Endothelial cell of umbilical vein (primary cell): ENCODE measurements at regions of chr13 and their contacts with region 1.

Region 1: GRCh38 chr13:80342471-80343380 is 1.8 kb upstream of the SPRY2 start:
- DNase-seq: peak; percentile 83
- H3K4me3 ChIP-seq: peak overlapping the region; percentile 30 to 77 (median 75)
- H3K27ac ChIP-seq: peak overlapping the region; percentile 82
- H3K4me1 ChIP-seq: peaks cover 17% of the 10 kb centered on the region
- H3K27me3 ChIP-seq: no peaks in the 10 kb centered on the region
- CTCF ChIP-seq: peak; percentile 97 to 98
- POLR2A ChIP-seq: no peak

Region 2: GRCh38 chr13:79767126-79767525 is 575.6 kb before region 1 on chr13:
- CTCF ChIA-PET with region 1: interaction called, 13 read pairs
- POLR2A ChIA-PET with region 1: interaction called, 7 read pairs
- dilution Hi-C with region 1: no loop called
- intact Hi-C with region 1: loop called (anchors 1 kb)
- DNase-seq: peak; percentile 73
- H3K4me3 ChIP-seq: no peak overlapping the region
- H3K27ac ChIP-seq: peak overlapping the region; percentile 76
- H3K4me1 ChIP-seq: peaks cover 14% of the 10 kb centered on the region
- H3K27me3 ChIP-seq: no peaks in the 10 kb centered on the region
- CTCF ChIP-seq: no peak
- POLR2A ChIP-seq: no peak

Region 3: DNA sequence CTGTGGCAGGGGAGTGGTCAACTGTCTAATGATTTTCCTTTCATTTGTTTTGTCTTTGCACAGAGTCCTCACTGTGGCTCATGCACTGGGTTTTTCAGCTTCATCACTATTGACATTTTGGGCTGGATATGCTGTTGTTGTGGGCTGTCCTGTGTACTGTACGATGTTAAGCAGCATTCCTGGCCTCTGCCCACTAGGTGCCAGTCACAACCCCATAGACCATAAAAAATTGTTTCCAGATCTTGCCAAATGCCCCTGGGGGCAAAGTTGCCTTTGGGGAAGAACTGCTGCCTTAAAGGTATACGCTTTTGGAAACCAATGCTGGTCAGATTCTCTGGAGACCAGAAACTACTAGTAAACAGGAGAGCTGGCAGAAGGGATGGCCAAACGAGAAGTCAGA is 312.2 kb before region 1 on chr13:
- CTCF ChIA-PET with region 1: interaction called, 3 read pairs
- POLR2A ChIA-PET with region 1: no interaction called
- dilution Hi-C with region 1: loop called (anchors 25 kb)
- intact Hi-C with region 1: loop called (anchors 1 kb)
- DNase-seq: peak; percentile 14
- H3K4me3 ChIP-seq: no peak overlapping the region
- H3K27ac ChIP-seq: no peak overlapping the region
- H3K4me1 ChIP-seq: no peaks in the 10 kb centered on the region
- H3K27me3 ChIP-seq: no peaks in the 10 kb centered on the region
- CTCF ChIP-seq: peak; percentile 38 to 40
- POLR2A ChIP-seq: no peak

Region 4: GRCh38 chr13:80217614-80218456 is 124.9 kb before region 1 on chr13:
- CTCF ChIA-PET with region 1: no interaction called
- POLR2A ChIA-PET with region 1: no interaction called
- dilution Hi-C with region 1: no loop called
- intact Hi-C with region 1: loop called (anchors 1 kb)
- DNase-seq: peak; percentile 82
- H3K4me3 ChIP-seq: no peak overlapping the region
- H3K27ac ChIP-seq: peak overlapping the region; percentile 85
- H3K4me1 ChIP-seq: peaks cover 15% of the 10 kb centered on the region
- H3K27me3 ChIP-seq: no peaks in the 10 kb centered on the region
- CTCF ChIP-seq: no peak
- POLR2A ChIP-seq: no peak

Region 5: GRCh38 chr13:80251403-80251802 is 91.3 kb before region 1 on chr13:
- CTCF ChIA-PET with region 1: no interaction called
- POLR2A ChIA-PET with region 1: no interaction called
- dilution Hi-C with region 1: no loop called
- intact Hi-C with region 1: no loop called
- DNase-seq: no peak
- H3K4me3 ChIP-seq: no peak overlapping the region
- H3K27ac ChIP-seq: no peak overlapping the region
- H3K4me1 ChIP-seq: no peaks in the 10 kb centered on the region
- H3K27me3 ChIP-seq: no peaks in the 10 kb centered on the region
- CTCF ChIP-seq: no peak
- POLR2A ChIP-seq: no peak

Region 6: GRCh38 chr13:80551650-80552497 is 209.1 kb after region 1 on chr13:
- CTCF ChIA-PET with region 1: no interaction called
- POLR2A ChIA-PET with region 1: no interaction called
- dilution Hi-C with region 1: no loop called
- intact Hi-C with region 1: loop called (anchors 2 kb)
- DNase-seq: peak; percentile 88
- H3K4me3 ChIP-seq: no peak overlapping the region
- H3K27ac ChIP-seq: no peak overlapping the region
- H3K4me1 ChIP-seq: peaks cover 46% of the 10 kb centered on the region
- H3K27me3 ChIP-seq: no peaks in the 10 kb centered on the region
- CTCF ChIP-seq: no peak
- POLR2A ChIP-seq: no peak

Region 7: GRCh38 chr13:80962855-80963254 is 620.1 kb after region 1 on chr13:
- CTCF ChIA-PET with region 1: interaction called, 3 read pairs
- POLR2A ChIA-PET with region 1: no interaction called
- dilution Hi-C with region 1: no loop called
- intact Hi-C with region 1: loop called (anchors 1 kb)
- DNase-seq: peak; percentile 32
- H3K4me3 ChIP-seq: no peak overlapping the region
- H3K27ac ChIP-seq: peak overlapping the region; percentile 70
- H3K4me1 ChIP-seq: peaks cover 15% of the 10 kb centered on the region
- H3K27me3 ChIP-seq: no peaks in the 10 kb centered on the region
- CTCF ChIP-seq: no peak
- POLR2A ChIP-seq: no peak